ENCODE measurements at regions of chr11 and their contacts with region 1.

Region 1: GRCh38 chr11:47302853-47303252 is 32.9 kb downstream of the MADD start:
- DNase-seq: no peak

Region 2: DNA sequence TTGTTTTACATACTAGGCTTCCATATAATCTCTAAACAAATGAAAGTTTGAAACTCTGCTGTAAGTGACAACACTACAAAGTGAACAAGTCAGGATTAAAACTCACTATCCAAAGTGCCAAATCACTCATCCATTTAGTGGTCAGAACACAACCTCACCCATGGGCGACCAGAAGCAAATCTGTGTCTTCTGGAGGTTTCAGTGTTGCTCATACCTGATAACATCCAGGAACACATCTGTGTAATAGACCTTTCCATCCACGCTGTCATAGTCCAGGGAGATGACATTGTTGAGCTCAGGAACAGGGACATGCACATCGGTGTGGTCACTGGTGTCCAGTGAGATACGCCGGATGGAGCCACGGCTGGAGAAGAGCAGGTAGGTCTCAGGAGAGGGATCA is 428.3 kb before region 1 on chr11:
- intact Hi-C with region 1: loop called in 1 of 2 experiments (anchors 5 kb)
- DNase-seq: no peak

Region 3: DNA sequence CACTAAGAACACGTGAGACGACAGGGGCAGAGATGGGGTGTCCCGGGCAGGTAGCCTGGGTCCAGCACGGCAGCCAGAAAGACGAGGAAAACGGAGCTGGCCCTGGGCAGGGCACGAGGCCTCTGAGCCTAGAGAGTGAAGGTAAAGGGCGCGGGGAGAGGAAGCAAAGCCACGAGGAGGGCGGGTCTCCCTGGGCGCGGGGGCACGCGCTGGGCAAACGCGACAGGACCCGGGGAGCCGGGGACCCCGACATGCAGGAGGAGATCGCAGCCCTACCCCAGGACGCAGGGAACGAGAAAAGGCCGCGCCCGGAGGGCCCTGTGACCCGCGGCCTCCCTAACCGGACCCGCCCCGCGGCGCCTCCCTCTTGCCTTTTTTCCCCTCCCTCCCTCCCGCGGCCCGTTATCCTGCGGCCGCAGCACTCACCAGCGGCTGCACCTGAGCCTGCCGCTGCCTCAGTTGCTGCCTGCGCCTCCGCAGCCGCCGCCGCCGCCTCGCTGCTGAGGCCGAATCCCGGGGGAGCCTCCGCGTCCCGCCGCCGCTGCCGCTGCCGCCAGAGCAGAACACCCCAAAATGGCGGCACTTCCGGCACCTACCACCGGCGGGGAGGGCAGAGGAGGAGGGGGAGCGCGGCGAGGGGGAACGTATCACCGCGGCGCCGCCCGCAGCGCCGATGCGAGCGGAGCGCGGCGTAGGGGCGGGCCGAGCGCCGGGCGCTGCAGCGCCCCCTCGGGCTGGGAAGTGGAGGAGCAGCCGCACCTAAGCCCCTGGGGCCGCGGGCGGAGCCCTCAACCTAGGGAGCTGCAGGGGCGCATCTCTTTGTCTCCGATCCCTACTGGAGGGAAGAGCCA is 249.9 kb after region 1 on chr11 and contains the start of gene CELF1:
- intact Hi-C with region 1: no loop called
- DNase-seq: peak; percentile 98
- total RNA-seq, gene CELF1: 83.8 to 96.3 TPM

Measured in posterior vena cava (tissue), 2 donors.